Ovary (tissue), 10 donors: ENCODE measurements at regions of chr14 and their contacts with region 1.

Region 1: GRCh38 chr14:24442273-24443052 is at the start of gene SDR39U1:
- DNase-seq: peak; percentile 96 to 98 (median 97)
- H3K4me3 ChIP-seq: peak within 1 kb of the TSS; percentile 85
- H3K27ac ChIP-seq: peak within 1 kb of the TSS; percentile 61 to 95
- H3K4me1 ChIP-seq: peaks cover 3% of the 10 kb centered on the region
- H3K27me3 ChIP-seq: no peaks in the 10 kb centered on the region
- CTCF ChIP-seq: no peak
- EP300 ChIP-seq: peak; percentile 80
- POLR2A ChIP-seq: peak; percentile 96
- total RNA-seq, gene SDR39U1: 46.2 to 68.8 (median 62.4) TPM

Region 2: GRCh38 chr14:24232121-24232644 is 210.3 kb before region 1 on chr14 and contains the start of gene NEDD8:
- intact Hi-C with region 1: loop called in 1 of 4 experiments (anchors 5 kb)
- DNase-seq: peak; percentile 90 to 95 (median 92)
- H3K4me3 ChIP-seq: peak within 1 kb of the TSS; percentile 84
- H3K27ac ChIP-seq: peak within 1 kb of the TSS; percentile 74 to 79
- H3K4me1 ChIP-seq: peaks cover 8% of the 10 kb centered on the region
- H3K27me3 ChIP-seq: no peaks in the 10 kb centered on the region
- CTCF ChIP-seq: no peak
- EP300 ChIP-seq: peak; percentile 21
- POLR2A ChIP-seq: peak; percentile 45
- total RNA-seq, gene NEDD8: 69.7 to 155 (median 124) TPM

Region 3: DNA sequence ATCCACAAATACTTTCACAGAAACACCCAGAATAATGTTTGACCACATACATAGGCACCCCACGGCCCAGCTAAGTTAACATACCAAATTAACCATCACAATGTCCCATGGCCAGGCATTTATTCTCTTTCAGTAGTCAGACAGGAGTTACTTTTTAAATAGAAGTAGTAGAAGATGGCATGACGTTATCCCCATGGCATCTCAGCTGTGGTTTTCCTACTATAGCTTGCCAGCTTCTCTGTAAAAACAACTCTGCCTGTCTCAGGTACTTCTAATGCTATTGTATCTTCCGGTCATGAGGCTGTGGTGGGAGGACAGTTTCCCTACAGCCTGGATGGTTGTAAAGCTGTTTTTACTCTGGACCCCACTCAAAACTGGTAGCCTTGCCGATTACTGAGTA is 114.3 kb after region 1 on chr14:
- intact Hi-C with region 1: no loop called
- DNase-seq: no peak
- H3K4me3 ChIP-seq: no peak overlapping the region
- H3K27ac ChIP-seq: no peak overlapping the region
- H3K4me1 ChIP-seq: no peaks in the 10 kb centered on the region
- H3K27me3 ChIP-seq: no peaks in the 10 kb centered on the region
- CTCF ChIP-seq: no peak
- EP300 ChIP-seq: no peak
- POLR2A ChIP-seq: no peak

Region 4: DNA sequence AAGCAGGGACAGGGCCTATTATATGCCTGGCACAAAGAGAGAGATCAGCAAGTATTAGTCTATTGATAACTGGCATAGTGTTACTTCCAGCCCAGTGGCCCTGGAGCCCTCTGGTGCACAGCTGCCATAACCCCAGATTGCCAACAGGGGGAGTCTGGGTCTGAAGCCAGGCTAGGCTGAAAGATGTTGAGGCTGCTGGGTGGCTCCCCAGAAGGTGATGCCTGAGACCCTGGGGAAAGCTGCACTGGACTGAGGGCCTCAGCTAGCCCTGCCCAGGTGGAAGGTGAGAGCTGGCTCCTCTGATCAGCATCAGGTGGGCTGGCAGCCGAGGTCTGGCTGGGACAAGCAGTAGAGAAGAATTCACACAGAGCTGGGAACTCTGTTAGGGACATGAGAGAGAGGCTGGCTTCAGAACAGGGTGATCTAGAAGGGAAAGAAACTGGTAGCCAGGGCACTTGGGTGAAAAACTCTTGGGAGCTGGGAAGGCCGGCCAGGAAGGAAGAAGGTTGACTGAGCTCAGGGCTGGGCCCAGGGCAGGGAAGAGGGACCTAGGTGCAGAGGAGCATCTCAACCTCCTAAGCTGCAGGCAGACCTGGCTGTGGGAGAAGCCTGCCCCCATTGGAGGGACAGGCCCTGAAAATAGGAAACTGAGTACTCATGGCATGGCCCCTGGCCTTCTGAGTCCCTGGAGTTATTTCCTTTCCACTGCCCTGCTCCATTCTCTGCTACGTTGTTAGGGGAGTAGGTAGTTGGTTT is 163.2 kb after region 1 on chr14:
- intact Hi-C with region 1: no loop called
- DNase-seq: no peak
- H3K4me3 ChIP-seq: no peak overlapping the region
- H3K27ac ChIP-seq: no peak overlapping the region
- H3K4me1 ChIP-seq: no peaks in the 10 kb centered on the region
- H3K27me3 ChIP-seq: no peaks in the 10 kb centered on the region
- CTCF ChIP-seq: no peak
- EP300 ChIP-seq: no peak
- POLR2A ChIP-seq: no peak